CD8-positive, alpha-beta T cell (primary cell): ENCODE measurements at regions of chr16 and their contacts with region 1.

Region 1: GRCh38 chr16:66521951-66522771 is 27.8 kb downstream of the TK2 start:
- DNase-seq: peak; percentile 17 to 91 (median 85)
- ATAC-seq: peak; percentile 82
- H3K4me3 ChIP-seq: peak overlapping the region in 1 of 2 experiments; percentile 21
- H3K4me3 Mint-ChIP-seq: peak overlapping the region; percentile 66
- H3K27ac ChIP-seq: peak overlapping the region in 1 of 2 experiments; percentile 58
- H3K27ac Mint-ChIP-seq: peak overlapping the region; percentile 95
- H3K4me1 ChIP-seq: peaks cover 72% of the 10 kb centered on the region
- H3K4me1 Mint-ChIP-seq: peaks cover 80% of the 10 kb centered on the region
- H3K27me3 ChIP-seq: no peaks in the 10 kb centered on the region
- H3K27me3 Mint-ChIP-seq: no peaks in the 10 kb centered on the region
- CTCF ChIP-seq: no peak

Region 2: GRCh38 chr16:66511615-66512500 is 10.3 kb before region 1 on chr16:
- CTCF ChIA-PET with region 1: interaction called, 12 read pairs
- POLR2A ChIA-PET with region 1: interaction called, 5 read pairs
- intact Hi-C with region 1: no loop called
- DNase-seq: peak in 2 of 9 experiments; percentile 27 to 33
- ATAC-seq: no peak
- H3K4me3 ChIP-seq: no peak overlapping the region
- H3K4me3 Mint-ChIP-seq: no peak overlapping the region
- H3K27ac ChIP-seq: no peak overlapping the region
- H3K27ac Mint-ChIP-seq: no peak overlapping the region
- H3K4me1 ChIP-seq: peaks cover 19% of the 10 kb centered on the region
- H3K4me1 Mint-ChIP-seq: peaks cover 27% of the 10 kb centered on the region
- H3K27me3 ChIP-seq: no peaks in the 10 kb centered on the region
- H3K27me3 Mint-ChIP-seq: no peaks in the 10 kb centered on the region
- CTCF ChIP-seq: no peak